MCF 10A (cell line): ENCODE measurements at regions of chr10 and their contacts with region 1.

Region 1: DNA sequence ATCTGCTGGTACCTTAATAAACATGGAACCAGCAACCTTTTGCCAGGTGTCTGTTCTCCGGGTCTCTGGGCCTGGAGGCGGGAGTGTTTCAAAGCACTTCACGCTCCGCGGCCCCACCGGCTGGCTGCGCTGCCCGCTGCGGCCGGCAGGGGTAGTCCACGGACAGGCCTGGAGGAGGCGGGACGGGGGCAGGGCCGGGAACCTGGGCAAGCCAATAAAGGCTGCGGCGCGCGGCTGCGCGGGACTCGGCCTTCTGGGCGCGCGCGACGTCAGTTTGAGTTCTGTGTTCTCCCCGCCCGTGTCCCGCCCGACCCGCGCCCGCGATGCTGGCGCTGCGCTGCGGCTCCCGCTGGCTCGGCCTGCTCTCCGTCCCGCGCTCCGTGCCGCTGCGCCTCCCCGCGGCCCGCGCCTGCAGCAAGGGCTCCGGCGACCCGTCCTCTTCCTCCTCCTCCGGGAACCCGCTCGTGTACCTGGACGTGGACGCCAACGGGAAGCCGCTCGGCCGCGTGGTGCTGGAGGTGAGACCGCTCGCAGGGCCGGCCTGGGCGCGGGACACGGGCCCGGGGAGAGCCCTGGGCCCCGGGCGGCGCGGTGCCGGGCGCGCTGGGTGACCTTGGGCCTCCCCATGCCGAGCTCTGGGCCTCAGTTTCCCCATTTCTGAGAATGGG is at the start of gene PPIF:
- DNase-seq: peak; percentile 92
- H3K4me3 Mint-ChIP-seq: peak within 1 kb of the TSS; percentile 81
- H3K27ac Mint-ChIP-seq: peak within 1 kb of the TSS; percentile 95
- H3K4me1 Mint-ChIP-seq: peaks cover 5% of the 10 kb centered on the region
- H3K27me3 Mint-ChIP-seq: no peaks in the 10 kb centered on the region
- CTCF ChIP-seq: peak; percentile 87
- total RNA-seq, gene PPIF: 76.5 and 76.9 TPM in 2 replicates

Region 2: GRCh38 chr10:79038841-79039201 is 308.5 kb before region 1 on chr10:
- CTCF ChIA-PET with region 1: no interaction called
- POLR2A ChIA-PET with region 1: no interaction called
- intact Hi-C with region 1: no loop called
- DNase-seq: no peak
- H3K4me3 Mint-ChIP-seq: no peak overlapping the region
- H3K27ac Mint-ChIP-seq: no peak overlapping the region
- H3K4me1 Mint-ChIP-seq: no peaks in the 10 kb centered on the region
- H3K27me3 Mint-ChIP-seq: peaks cover 41% of the 10 kb centered on the region
- CTCF ChIP-seq: no peak

Region 3: DNA sequence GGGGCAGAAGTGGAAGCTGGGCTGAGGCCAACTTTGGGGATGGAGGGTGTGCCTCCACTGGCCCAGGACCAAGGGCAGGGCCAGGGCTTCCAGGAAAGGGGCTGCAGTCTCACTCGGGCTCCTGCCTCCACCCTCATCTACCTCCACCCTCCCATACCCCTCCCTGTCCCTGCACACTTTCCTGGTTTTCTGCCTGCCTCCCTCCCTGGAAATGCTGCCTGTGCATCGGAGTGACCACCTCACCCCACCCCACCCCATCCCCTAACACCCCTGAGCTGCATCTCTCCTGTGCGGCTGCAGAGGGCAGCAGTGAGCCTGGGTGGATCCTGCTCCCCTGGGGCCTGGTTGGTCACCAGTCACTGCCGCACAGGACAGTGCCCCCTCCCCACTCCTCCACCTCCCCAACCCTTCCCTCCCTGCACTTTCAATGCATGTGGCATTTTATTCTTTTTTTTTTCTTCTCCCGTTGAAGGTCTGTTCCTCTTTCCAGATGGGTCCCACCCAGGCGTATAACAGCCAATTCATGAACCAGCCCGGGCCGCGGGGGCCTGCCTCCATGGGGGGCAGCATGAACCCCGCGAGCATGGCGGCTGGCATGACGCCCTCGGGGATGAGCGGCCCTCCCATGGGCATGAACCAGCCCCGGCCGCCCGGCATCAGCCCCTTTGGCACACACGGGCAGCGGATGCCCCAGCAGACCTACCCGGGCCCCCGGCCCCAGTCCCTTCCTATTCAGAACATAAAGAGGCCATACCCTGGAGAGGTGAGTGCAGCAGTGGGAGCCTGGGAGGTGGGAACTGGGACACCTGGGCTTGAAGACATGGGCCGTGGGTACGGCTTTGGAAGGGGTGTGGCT is 54.2 kb before region 1 on chr10:
- CTCF ChIA-PET with region 1: interaction called, 3 read pairs
- POLR2A ChIA-PET with region 1: no interaction called
- intact Hi-C with region 1: loop called (anchors 1 kb)
- DNase-seq: peak; percentile 29
- H3K4me3 Mint-ChIP-seq: no peak overlapping the region
- H3K27ac Mint-ChIP-seq: no peak overlapping the region
- H3K4me1 Mint-ChIP-seq: peaks cover 13% of the 10 kb centered on the region
- H3K27me3 Mint-ChIP-seq: no peaks in the 10 kb centered on the region
- CTCF ChIP-seq: peak; percentile 47

Region 4: GRCh38 chr10:79298403-79299244 is 48.7 kb before region 1 on chr10:
- CTCF ChIA-PET with region 1: interaction called, 3 read pairs
- POLR2A ChIA-PET with region 1: no interaction called
- intact Hi-C with region 1: loop called (anchors 1 kb)
- DNase-seq: peak; percentile 93
- H3K4me3 Mint-ChIP-seq: no peak overlapping the region
- H3K27ac Mint-ChIP-seq: no peak overlapping the region
- H3K4me1 Mint-ChIP-seq: peaks cover 17% of the 10 kb centered on the region
- H3K27me3 Mint-ChIP-seq: no peaks in the 10 kb centered on the region
- CTCF ChIP-seq: no peak

Region 5: DNA sequence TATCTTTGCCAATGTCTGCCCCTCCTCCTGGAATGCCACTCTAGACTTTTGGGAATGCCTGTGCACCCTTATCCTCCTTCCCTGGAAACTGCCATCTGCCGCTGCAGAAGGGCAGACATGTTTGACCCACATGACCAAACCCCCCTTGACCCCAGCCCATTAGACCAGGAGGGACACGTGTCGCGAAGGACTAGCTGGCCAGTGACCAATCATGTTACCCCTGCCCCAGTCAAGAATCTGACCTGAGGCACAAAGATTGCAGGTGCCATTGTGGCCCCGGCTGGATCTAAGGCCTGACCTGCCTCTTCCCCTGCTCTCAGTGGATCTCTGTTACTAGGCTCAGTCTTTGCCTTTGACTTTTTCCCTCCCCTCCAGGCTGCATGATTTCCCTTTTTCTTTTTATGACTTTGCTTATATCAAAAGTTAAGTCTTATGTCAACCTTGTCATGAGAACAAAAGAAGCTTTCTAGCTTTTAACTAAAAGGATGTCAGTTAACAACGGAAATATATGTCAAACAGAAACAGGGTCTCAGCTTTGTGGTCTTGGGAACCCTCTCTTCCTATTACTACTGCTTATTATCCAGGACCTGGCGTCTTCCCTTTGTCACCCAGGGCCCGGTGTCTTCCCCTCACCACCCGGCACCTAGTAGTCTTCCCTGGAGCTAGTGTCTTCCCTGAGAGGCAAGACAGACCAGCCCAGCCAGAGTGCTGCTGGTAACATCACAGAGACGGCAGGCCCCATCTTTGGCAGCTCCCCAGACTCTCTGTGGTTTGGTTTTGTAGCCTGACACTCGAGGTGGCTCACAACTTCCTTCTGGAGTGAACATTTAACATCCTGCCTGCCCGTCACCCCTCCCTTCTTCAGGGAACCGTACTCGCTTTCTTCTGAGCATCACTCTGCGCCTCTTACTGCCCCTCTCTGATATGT is 24.5 kb before region 1 on chr10:
- CTCF ChIA-PET with region 1: interaction called, 6 read pairs
- POLR2A ChIA-PET with region 1: interaction called, 20 read pairs
- intact Hi-C with region 1: no loop called
- DNase-seq: peak; percentile 73
- H3K4me3 Mint-ChIP-seq: no peak overlapping the region
- H3K27ac Mint-ChIP-seq: peak overlapping the region; percentile 63
- H3K4me1 Mint-ChIP-seq: peaks cover 47% of the 10 kb centered on the region
- H3K27me3 Mint-ChIP-seq: no peaks in the 10 kb centered on the region
- CTCF ChIP-seq: no peak

Region 6: DNA sequence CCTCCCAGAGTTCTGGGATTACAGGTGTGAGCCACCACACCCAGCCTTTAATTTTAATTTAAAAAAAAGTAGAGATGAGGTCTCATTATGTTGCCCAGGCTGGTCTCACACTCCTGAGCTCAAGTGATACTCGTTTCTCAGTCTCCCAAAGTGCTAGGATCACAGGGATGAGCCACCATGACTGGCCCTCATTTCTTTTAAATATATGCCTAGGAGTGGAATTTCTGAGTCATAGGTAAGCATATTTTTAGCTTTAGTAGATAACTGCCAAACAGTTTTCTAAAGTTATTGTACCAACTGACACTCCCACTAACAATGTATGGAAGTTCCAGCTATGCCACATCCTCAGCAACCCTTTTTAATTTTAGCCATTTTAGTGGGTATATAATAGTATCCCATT is 13.9 kb before region 1 on chr10:
- CTCF ChIA-PET with region 1: interaction called, 34 read pairs
- POLR2A ChIA-PET with region 1: interaction called, 7 read pairs
- intact Hi-C with region 1: no loop called
- DNase-seq: peak; percentile 59
- H3K4me3 Mint-ChIP-seq: no peak overlapping the region
- H3K27ac Mint-ChIP-seq: no peak overlapping the region
- H3K4me1 Mint-ChIP-seq: peaks cover 15% of the 10 kb centered on the region
- H3K27me3 Mint-ChIP-seq: no peaks in the 10 kb centered on the region
- CTCF ChIP-seq: no peak